ENCODE measurements at regions of chr1 and their contacts with region 1.

Region 1: DNA sequence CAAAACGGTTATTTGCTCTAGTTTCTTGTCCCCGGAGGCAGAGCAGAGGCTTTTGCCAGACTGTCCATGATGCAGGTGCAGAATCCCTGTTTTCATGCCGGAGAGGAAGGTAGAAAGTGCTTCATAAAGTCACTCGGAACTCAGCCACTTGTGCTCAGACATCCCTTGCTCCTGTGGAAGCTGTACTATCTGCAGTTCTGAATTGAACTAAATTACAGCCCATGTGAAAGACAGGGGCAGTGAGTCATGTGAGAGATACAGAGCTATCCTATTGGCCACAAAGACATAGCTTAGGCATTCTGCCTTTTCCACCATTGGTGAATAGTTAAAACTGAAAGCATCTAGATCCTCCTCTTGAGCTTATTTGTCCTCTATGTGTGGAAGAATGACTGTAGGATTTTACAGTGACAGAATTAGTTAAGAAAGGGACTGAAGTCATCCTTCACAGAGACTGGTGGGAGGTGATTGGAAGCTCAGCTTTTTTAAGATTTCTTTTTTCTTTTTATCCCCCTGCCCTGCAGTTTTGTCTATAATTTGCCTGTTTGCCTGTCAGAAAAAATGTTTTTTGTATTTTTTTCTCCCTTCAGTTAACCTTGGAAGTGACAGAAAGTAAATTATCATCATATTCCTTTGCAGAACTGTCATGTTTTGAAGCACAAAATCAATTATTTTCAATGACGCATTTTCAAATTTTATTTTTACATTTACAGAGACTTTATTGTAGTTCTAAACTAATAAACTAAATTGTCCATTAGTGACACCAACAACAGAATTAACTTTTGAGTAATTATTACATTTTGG is 298.6 kb downstream of the PTPRC start:
- DNase-seq: no peak
- ATAC-seq: peak; percentile 94
- H3K4me3 Mint-ChIP-seq: peak overlapping the region; percentile 95
- H3K27ac Mint-ChIP-seq: peak overlapping the region; percentile 88
- H3K4me1 Mint-ChIP-seq: peaks cover 35% of the 10 kb centered on the region
- H3K27me3 Mint-ChIP-seq: no peaks in the 10 kb centered on the region
- CTCF ChIP-seq: no peak

Region 2: GRCh38 chr1:197915862-197916499 is 1021.5 kb before region 1 on chr1:
- CTCF ChIA-PET with region 1: no interaction called
- POLR2A ChIA-PET with region 1: no interaction called
- intact Hi-C with region 1: loop called (anchors 5 kb)
- DNase-seq: no peak
- ATAC-seq: peak; percentile 12
- H3K4me3 Mint-ChIP-seq: peak overlapping the region; percentile 65
- H3K27ac Mint-ChIP-seq: no peak overlapping the region
- H3K4me1 Mint-ChIP-seq: peaks cover 83% of the 10 kb centered on the region
- H3K27me3 Mint-ChIP-seq: peaks cover 84% of the 10 kb centered on the region
- CTCF ChIP-seq: no peak

Region 3: DNA sequence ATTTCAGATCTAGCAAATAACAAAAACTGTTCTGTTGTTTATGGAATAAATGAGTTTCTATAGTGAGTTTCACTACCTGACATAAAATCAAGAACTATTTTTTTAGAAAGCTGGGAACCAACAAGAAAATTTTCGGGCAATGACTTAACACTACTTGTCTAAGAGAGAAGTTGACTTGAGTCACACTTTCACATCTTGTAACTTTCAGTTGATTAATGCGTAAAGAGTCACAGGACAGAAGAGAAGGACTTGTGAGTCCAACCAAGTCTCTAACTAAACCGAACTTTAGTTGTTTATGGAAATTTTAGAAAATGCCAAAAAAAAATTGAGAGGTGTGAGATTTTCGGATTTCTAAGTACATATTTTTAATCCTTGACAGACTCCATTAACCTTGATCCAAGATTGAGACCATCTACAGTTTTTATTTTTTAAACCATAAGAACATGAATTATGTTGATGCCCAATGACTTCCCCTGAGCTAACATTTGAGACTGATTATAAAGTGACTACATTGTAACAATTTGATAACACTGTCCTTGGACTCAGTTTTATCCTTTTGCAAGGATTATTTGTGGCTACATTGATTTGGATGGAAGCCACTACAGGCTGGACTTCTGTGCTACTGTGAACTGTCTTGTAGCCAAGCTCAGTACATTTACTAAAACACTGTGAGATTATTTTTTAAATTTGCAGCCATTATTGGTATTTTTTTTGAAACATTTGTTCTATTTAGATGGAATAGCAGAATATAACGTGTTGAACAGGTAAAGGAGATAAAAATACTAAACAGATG is 14.6 kb before region 1 on chr1:
- CTCF ChIA-PET with region 1: no interaction called
- POLR2A ChIA-PET with region 1: interaction called, 23 read pairs
- intact Hi-C with region 1: loop called (anchors 1 kb)
- DNase-seq: no peak
- ATAC-seq: peak; percentile 71
- H3K4me3 Mint-ChIP-seq: peak overlapping the region; percentile 55
- H3K27ac Mint-ChIP-seq: peak overlapping the region; percentile 62
- H3K4me1 Mint-ChIP-seq: peaks cover 67% of the 10 kb centered on the region
- H3K27me3 Mint-ChIP-seq: no peaks in the 10 kb centered on the region
- CTCF ChIP-seq: no peak

Region 4: DNA sequence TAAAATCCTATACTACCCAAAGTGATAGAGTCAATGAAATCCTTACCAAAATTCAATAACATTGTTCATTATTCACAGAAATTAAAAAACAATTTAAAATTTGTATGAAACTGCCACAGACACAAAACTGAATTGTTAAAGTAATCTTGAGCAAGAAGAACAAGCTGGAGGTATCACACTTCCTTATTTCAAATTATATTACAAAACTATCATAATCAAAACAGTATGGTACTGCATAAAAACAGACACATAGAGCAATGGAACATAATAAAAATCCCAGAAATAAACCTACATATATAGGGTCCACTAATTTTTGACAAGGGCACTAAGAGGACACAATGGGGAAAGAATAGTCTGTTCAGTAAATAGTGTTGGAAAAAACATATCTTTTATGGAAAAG is 17.7 kb after region 1 on chr1:
- CTCF ChIA-PET with region 1: no interaction called
- POLR2A ChIA-PET with region 1: no interaction called
- intact Hi-C with region 1: loop called (anchors 2 kb)
- DNase-seq: no peak
- ATAC-seq: no peak
- H3K4me3 Mint-ChIP-seq: no peak overlapping the region
- H3K27ac Mint-ChIP-seq: no peak overlapping the region
- H3K4me1 Mint-ChIP-seq: no peaks in the 10 kb centered on the region
- H3K27me3 Mint-ChIP-seq: no peaks in the 10 kb centered on the region
- CTCF ChIP-seq: no peak

Region 5: DNA sequence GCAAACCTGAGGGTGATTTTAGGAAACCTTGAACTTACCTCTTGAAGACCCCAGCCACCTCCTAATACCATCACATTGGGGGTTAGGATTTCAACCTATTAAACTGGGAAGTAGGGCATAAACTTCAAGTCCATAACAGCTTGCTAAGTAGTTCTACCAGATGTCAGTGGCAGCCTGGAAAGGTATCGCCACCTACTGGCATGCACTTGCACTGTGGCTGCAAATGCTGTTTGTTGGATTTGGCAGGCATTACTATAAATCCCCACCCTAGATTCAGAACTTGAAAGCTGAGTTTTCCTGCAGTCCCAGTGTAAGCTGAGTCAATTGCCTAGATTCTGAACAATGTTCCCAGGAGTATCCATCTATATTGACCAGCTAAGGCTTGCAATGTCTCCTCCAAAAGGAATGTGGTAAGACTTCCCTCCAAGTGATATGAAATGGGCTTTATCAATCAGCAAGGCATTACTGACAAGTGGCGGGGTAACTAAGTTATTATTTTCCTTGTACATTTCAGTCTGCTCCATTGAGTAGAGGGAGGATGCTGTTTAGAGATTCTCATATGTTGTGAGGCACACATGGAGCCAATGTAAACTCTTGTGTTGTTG is 175.9 kb after region 1 on chr1:
- CTCF ChIA-PET with region 1: interaction called, 5 read pairs
- POLR2A ChIA-PET with region 1: no interaction called
- intact Hi-C with region 1: loop called (anchors 1 kb)
- DNase-seq: peak; percentile 21
- ATAC-seq: peak; percentile 57
- H3K4me3 Mint-ChIP-seq: no peak overlapping the region
- H3K27ac Mint-ChIP-seq: no peak overlapping the region
- H3K4me1 Mint-ChIP-seq: peaks cover 5% of the 10 kb centered on the region
- H3K27me3 Mint-ChIP-seq: no peaks in the 10 kb centered on the region
- CTCF ChIP-seq: no peak

Region 6: GRCh38 chr1:199151634-199152425 is 214.4 kb after region 1 on chr1:
- CTCF ChIA-PET with region 1: no interaction called
- POLR2A ChIA-PET with region 1: no interaction called
- intact Hi-C with region 1: loop called (anchors 5 kb)
- DNase-seq: no peak
- ATAC-seq: peak; percentile 62
- H3K4me3 Mint-ChIP-seq: peak overlapping the region; percentile 17
- H3K27ac Mint-ChIP-seq: no peak overlapping the region
- H3K4me1 Mint-ChIP-seq: peaks cover 18% of the 10 kb centered on the region
- H3K27me3 Mint-ChIP-seq: peaks cover 41% of the 10 kb centered on the region
- CTCF ChIP-seq: no peak

Region 7: GRCh38 chr1:199403531-199404116 is 466.2 kb after region 1 on chr1:
- CTCF ChIA-PET with region 1: no interaction called
- POLR2A ChIA-PET with region 1: no interaction called
- intact Hi-C with region 1: loop called (anchors 1 kb)
- DNase-seq: no peak
- ATAC-seq: peak; percentile 56
- H3K4me3 Mint-ChIP-seq: no peak overlapping the region
- H3K27ac Mint-ChIP-seq: no peak overlapping the region
- H3K4me1 Mint-ChIP-seq: peaks cover 59% of the 10 kb centered on the region
- H3K27me3 Mint-ChIP-seq: no peaks in the 10 kb centered on the region
- CTCF ChIP-seq: no peak